MCF 10A (cell line): ENCODE measurements at regions of chr1 and their contacts with region 1.

Region 1: GRCh38 chr1:18938008-18938706 is 18.3 kb downstream of the IFFO2 start:
- DNase-seq: no peak
- H3K4me3 Mint-ChIP-seq: no peak overlapping the region
- H3K27ac Mint-ChIP-seq: no peak overlapping the region
- H3K4me1 Mint-ChIP-seq: peaks cover 21% of the 10 kb centered on the region
- H3K27me3 Mint-ChIP-seq: no peaks in the 10 kb centered on the region
- CTCF ChIP-seq: no peak

Region 2: GRCh38 chr1:18972531-18972930 is 34.4 kb after region 1 on chr1:
- CTCF ChIA-PET with region 1: interaction called, 10 read pairs
- POLR2A ChIA-PET with region 1: no interaction called
- intact Hi-C with region 1: no loop called
- DNase-seq: peak; percentile 51
- H3K4me3 Mint-ChIP-seq: no peak overlapping the region
- H3K27ac Mint-ChIP-seq: no peak overlapping the region
- H3K4me1 Mint-ChIP-seq: no peaks in the 10 kb centered on the region
- H3K27me3 Mint-ChIP-seq: no peaks in the 10 kb centered on the region
- CTCF ChIP-seq: peak; percentile 30